ENCODE measurements at regions of chr11 and their contacts with region 1.

Region 1: GRCh38 chr11:65180877-65181568 is 705 bp upstream of the CAPN1 start:
- DNase-seq: peak; percentile 87
- H3K4me3 Mint-ChIP-seq: peak overlapping the region; percentile 89
- H3K27ac Mint-ChIP-seq: peak overlapping the region; percentile 52
- H3K4me1 Mint-ChIP-seq: peaks cover 19% of the 10 kb centered on the region
- H3K27me3 Mint-ChIP-seq: no peaks in the 10 kb centered on the region
- CTCF ChIP-seq: peak; percentile 71

Region 2: GRCh38 chr11:65111744-65112414 is 69.1 kb before region 1 on chr11 and contains the start of gene TM7SF2:
- CTCF ChIA-PET with region 1: interaction called, 9 read pairs
- intact Hi-C with region 1: loop called (anchors 5 kb)
- DNase-seq: peak; percentile 97
- H3K4me3 Mint-ChIP-seq: peak within 1 kb of the TSS; percentile 81
- H3K27ac Mint-ChIP-seq: peak within 1 kb of the TSS; percentile 79
- H3K4me1 Mint-ChIP-seq: peaks cover 34% of the 10 kb centered on the region
- H3K27me3 Mint-ChIP-seq: no peaks in the 10 kb centered on the region
- CTCF ChIP-seq: no peak
- total RNA-seq, gene TM7SF2: 41.2 and 42.8 TPM in 2 replicates

Region 3: DNA sequence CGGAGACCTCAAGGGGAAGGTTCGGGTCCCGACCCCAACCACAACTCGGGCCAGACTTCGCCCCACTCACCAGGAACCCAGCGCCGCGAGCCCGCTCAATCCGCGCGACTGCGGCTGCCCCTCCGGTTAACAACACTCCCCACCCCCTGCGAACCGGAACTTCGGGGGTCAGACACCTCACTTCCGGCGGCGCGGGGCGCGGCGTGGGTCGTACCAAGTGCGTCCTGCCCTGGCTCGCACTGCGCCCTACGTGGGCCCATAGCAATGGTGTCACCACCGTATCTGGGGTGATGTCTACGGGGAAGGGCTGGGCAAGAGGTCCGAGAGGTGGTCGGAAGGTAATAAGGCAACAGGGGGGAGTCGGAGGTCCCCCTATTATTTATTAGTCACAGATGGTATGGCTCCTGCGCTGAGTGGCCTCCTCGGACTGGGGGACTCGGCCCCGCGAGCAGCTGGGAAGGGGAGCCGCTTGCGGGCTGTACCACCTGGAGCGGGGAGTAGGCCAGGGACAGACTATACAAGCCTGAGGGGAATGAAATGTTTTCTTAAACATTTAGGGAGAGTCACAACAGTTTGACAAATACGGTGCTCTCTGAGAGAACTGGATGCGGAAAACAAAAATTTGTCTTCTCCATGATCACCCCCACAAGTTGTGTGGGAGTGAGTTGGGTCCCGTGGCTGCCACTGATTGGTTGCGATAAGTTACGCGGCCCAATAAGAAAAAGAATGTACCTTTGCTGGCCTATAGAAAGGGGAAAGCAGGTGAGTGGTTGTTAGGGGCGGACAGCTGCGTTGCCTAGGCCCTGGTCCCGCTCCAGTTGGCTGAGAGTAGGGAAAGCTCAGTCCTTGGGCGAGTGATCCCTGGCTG is 46.4 kb before region 1 on chr11 and contains the start of gene SYVN1:
- CTCF ChIA-PET with region 1: interaction called, 27 read pairs
- intact Hi-C with region 1: loop called (anchors 5 kb)
- DNase-seq: peak; percentile 92
- H3K4me3 Mint-ChIP-seq: peak within 1 kb of the TSS; percentile 99
- H3K27ac Mint-ChIP-seq: peak within 1 kb of the TSS; percentile 100
- H3K4me1 Mint-ChIP-seq: peaks cover 28% of the 10 kb centered on the region
- H3K27me3 Mint-ChIP-seq: no peaks in the 10 kb centered on the region
- CTCF ChIP-seq: no peak
- total RNA-seq, gene SYVN1: 68.5 and 76.7 TPM in 2 replicates

Region 4: DNA sequence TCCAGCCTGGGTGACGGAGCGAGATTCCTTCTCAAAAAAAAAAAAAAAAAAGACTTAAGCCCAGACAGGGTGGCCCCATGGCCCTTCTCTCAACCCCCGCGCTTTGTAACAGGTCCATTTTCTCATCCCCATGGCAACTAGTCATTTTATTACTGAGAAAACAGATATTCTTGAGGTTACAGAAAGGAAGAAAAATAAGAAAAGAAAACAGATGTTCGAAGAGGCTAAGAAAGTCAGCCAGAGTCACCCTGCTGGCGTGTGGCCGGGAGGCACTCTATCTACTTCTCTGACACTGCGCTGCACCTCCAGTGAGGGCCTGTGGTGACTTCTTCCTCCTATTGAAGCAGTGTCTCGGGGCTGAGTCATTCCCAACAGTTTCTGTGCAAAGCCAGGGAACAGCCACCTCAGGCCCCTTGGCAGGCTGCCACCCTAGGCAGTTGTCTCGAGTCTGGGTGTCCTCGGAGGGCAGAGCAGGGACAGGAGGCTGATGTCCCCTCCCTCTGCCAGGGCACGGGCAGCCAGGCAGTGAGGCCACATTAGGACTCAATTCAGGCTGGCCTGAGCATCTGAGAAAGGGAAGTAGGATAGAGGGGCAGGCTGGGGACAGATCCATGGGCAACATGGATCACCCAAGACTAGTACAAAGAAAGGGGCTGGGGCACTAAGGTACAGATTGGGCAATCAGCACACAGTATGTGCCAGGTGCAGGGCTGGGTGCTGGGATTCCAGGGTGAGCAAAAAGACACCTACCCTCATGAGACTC is 30.3 kb before region 1 on chr11:
- CTCF ChIA-PET with region 1: no interaction called
- intact Hi-C with region 1: loop called (anchors 2 kb)
- DNase-seq: peak; percentile 96
- H3K4me3 Mint-ChIP-seq: peak overlapping the region; percentile 24
- H3K27ac Mint-ChIP-seq: peak overlapping the region; percentile 57
- H3K4me1 Mint-ChIP-seq: peaks cover 45% of the 10 kb centered on the region
- H3K27me3 Mint-ChIP-seq: no peaks in the 10 kb centered on the region
- CTCF ChIP-seq: no peak

Region 5: DNA sequence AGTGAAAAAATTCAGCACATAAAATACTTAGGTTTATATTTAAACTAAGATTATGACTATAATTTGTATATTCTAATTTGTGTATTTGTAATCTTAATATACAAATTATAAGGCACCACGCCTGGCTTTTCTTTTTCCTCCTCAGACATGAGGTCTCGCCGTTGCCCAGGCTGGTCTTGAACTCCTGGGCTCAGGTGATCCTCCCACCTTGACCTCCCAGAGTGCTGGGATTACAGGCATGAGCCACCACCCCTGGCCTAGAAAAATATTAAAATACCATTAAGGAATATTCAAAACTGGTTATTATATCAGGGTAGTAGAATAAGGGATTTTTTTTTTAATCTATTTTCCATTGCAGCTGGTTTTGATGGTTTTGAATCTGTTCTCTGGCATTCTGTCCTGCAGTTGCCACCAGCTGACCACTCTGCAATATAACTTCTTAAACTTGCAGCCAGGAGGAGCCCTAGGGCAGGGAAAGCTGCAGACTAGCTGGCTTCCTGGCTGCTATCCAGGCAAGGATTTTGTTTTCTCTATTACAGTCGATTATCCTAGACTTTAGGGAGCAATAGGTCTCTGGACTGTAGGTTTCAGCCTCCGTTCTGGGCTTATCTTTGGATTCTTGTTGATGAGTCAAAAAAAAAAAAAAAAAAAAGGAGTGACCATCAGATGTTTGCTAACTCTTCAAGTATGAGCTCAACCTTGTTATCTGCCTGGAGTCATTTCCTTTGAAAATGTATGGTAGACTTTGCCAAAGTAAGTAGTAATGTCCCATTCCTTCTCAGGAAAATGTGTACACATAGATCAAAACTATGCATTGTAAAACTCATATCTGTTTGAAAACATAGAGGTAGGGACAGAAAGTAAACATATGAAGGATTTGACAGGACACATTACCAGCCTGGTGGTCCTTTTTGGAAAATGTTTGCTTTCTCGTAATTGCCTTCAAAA is 94.0 kb after region 1 on chr11:
- CTCF ChIA-PET with region 1: no interaction called
- intact Hi-C with region 1: no loop called
- DNase-seq: peak; percentile 86
- H3K4me3 Mint-ChIP-seq: peak overlapping the region; percentile 14
- H3K27ac Mint-ChIP-seq: peak overlapping the region; percentile 76
- H3K4me1 Mint-ChIP-seq: peaks cover 48% of the 10 kb centered on the region
- H3K27me3 Mint-ChIP-seq: no peaks in the 10 kb centered on the region
- CTCF ChIP-seq: peak; percentile 79

Region 6: DNA sequence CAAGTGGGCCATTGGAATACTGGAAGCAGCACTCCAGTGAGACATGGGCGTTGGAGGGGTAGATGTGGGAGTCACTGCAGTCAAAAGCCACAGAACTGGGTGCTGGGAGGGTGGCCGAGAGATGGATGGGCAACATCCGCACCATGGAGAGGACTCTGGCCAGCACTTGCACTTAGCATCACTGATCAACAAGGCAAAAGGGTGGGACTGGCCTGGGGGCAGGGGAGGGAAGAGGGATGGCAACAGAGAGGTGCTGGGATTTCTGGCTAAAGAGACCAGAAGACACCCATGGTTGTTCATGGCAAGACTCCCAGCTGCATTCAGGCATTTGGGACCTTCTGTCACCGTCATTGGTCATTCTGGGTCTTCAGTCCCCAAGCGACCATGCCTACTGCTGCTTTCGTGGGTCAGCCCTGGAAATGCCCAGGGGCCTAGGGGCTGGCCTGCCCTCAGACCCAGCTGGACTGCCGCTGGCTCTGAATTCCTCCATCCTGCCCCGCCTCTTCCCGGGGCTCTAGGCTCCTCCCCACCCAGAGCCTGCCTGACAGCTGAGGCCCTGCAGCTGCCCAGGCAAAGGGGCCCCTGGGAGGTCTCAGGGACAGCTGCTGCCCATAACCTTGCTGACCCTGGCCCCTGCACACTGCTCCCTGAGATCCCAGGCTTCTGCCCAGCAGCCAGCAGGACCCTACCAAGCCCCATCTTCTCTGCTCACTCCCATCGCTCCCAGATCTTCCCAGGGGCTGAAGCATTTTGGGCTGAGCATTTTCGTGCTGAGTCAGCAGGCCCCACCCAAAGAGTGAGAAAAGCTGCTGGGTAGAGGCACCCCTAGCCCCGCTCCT is 120.7 kb after region 1 on chr11:
- CTCF ChIA-PET with region 1: no interaction called
- intact Hi-C with region 1: no loop called
- DNase-seq: no peak
- H3K4me3 Mint-ChIP-seq: no peak overlapping the region
- H3K27ac Mint-ChIP-seq: no peak overlapping the region
- H3K4me1 Mint-ChIP-seq: no peaks in the 10 kb centered on the region
- H3K27me3 Mint-ChIP-seq: no peaks in the 10 kb centered on the region
- CTCF ChIP-seq: no peak

Region 7: GRCh38 chr11:66035653-66036333 is 854.8 kb after region 1 on chr11:
- CTCF ChIA-PET with region 1: no interaction called
- intact Hi-C with region 1: no loop called
- DNase-seq: no peak
- H3K4me3 Mint-ChIP-seq: no peak overlapping the region
- H3K27ac Mint-ChIP-seq: no peak overlapping the region
- H3K4me1 Mint-ChIP-seq: no peaks in the 10 kb centered on the region
- H3K27me3 Mint-ChIP-seq: peaks cover 30% of the 10 kb centered on the region
- CTCF ChIP-seq: no peak

Measured in Calu3 (cell line).